ENCODE measurements at regions of chrX and their contacts with region 1.

Region 1: DNA sequence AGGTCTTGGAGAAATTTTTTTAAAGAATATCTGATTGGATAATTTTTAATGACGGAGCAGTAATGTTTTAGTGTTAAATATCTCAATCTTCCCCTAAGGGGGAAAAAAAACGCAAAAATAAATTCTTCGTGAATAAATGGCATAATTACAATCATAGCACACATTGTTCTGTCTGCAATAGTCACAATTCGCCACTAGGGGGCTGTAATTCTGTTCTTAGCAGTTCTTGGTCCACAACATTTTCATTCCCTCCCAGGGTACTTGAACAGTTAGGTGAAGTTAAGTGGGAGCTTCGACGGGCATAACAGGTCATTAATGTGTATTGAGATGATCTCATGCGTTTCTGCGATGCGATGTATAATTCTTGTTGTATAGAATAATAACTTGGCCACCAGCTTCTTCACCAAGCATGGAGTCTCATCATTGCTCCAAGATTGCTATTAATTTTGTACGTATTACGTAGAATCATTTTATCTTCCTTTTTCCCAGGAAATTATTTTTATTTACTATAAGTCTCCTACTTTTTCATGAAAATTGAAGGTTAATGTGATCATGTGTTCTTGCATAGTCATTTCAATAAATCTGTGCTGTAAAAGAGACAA is 27.2 kb downstream of the HTR2C start:
- DNase-seq: peak in 1 of 2 experiments; percentile 16
- H3K4me3 ChIP-seq: no peak overlapping the region
- H3K27ac ChIP-seq: no peak overlapping the region
- H3K4me1 ChIP-seq: no peaks in the 10 kb centered on the region
- H3K27me3 ChIP-seq: no peaks in the 10 kb centered on the region
- CTCF ChIP-seq: peak; percentile 93

Region 2: DNA sequence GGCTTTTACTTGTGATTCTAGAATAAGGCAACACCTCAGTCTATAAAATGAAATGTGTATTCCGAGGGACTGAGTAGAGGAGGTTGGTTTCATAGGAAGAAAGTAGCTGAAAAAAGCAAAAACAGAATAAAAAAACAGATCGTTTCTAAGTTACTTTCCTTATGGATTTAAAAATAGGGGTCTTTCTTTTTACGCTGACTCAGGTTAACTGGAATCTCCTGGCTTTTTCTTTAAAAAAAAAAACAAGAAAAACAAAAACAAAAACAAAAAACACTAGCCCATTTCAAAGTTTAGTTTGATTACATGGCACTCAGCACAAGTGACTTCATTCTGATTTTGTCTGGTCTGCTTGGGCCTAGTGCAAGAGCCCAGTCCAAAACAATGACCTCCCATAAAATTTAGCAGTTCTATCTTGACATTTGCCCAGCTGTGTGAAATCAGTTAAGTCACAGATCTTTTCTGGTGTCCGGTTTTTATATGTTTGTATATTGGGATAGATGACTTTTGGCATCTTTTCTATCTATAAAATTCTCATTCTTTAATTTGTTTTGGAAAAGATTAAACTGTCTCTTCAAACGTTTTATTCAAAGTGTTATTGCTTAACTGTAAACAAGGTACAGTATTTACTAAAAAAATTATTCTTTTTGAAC is 249.9 kb before region 1 on chrX:
- CTCF ChIA-PET with region 1: no interaction called
- POLR2A ChIA-PET with region 1: no interaction called
- intact Hi-C with region 1: no loop called
- DNase-seq: no peak
- H3K4me3 ChIP-seq: no peak overlapping the region
- H3K27ac ChIP-seq: no peak overlapping the region
- H3K4me1 ChIP-seq: no peaks in the 10 kb centered on the region
- H3K27me3 ChIP-seq: no peaks in the 10 kb centered on the region
- CTCF ChIP-seq: no peak

Region 3: DNA sequence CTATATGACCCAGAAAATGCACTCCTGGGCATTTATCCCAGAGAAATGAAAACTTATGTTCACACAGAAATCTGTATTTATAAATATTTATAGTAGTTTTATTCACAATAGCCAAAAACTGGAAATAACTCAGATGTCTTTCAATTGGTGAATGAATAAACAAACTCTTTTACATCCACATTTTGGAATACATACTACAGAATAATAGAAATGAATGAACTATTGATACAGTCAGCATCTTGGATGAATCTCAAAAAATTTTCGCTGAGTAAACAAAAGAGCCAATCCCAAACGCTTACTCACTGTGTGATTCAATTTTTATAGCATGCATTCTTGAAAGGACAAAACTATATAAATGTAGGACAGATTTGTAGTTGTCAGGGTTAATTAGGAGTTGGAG is 102.4 kb before region 1 on chrX:
- CTCF ChIA-PET with region 1: no interaction called
- POLR2A ChIA-PET with region 1: no interaction called
- intact Hi-C with region 1: no loop called
- DNase-seq: no peak
- H3K4me3 ChIP-seq: no peak overlapping the region
- H3K27ac ChIP-seq: no peak overlapping the region
- H3K4me1 ChIP-seq: no peaks in the 10 kb centered on the region
- H3K27me3 ChIP-seq: no peaks in the 10 kb centered on the region
- CTCF ChIP-seq: no peak

Region 4: GRCh38 chrX:114584983-114585842 is 25.9 kb before region 1 on chrX:
- CTCF ChIA-PET with region 1: interaction called, 13 read pairs
- POLR2A ChIA-PET with region 1: no interaction called
- intact Hi-C with region 1: no loop called
- DNase-seq: no peak
- H3K4me3 ChIP-seq: no peak overlapping the region
- H3K27ac ChIP-seq: no peak overlapping the region
- H3K4me1 ChIP-seq: no peaks in the 10 kb centered on the region
- H3K27me3 ChIP-seq: no peaks in the 10 kb centered on the region
- CTCF ChIP-seq: no peak

Region 5: GRCh38 chrX:114650351-114650750 is 39.2 kb after region 1 on chrX:
- CTCF ChIA-PET with region 1: no interaction called
- POLR2A ChIA-PET with region 1: no interaction called
- intact Hi-C with region 1: no loop called
- DNase-seq: no peak
- H3K4me3 ChIP-seq: no peak overlapping the region
- H3K27ac ChIP-seq: no peak overlapping the region
- H3K4me1 ChIP-seq: no peaks in the 10 kb centered on the region
- H3K27me3 ChIP-seq: no peaks in the 10 kb centered on the region
- CTCF ChIP-seq: no peak

Region 6: GRCh38 chrX:115147220-115147619 is 536.1 kb after region 1 on chrX:
- CTCF ChIA-PET with region 1: no interaction called
- POLR2A ChIA-PET with region 1: no interaction called
- intact Hi-C with region 1: loop called (anchors 10 kb)
- DNase-seq: peak in 1 of 2 experiments; percentile 42
- H3K4me3 ChIP-seq: no peak overlapping the region
- H3K27ac ChIP-seq: no peak overlapping the region
- H3K4me1 ChIP-seq: no peaks in the 10 kb centered on the region
- H3K27me3 ChIP-seq: no peaks in the 10 kb centered on the region
- CTCF ChIP-seq: peak; percentile 77